ENCODE measurements at regions of chr2 and their contacts with region 1.

Region 1: DNA sequence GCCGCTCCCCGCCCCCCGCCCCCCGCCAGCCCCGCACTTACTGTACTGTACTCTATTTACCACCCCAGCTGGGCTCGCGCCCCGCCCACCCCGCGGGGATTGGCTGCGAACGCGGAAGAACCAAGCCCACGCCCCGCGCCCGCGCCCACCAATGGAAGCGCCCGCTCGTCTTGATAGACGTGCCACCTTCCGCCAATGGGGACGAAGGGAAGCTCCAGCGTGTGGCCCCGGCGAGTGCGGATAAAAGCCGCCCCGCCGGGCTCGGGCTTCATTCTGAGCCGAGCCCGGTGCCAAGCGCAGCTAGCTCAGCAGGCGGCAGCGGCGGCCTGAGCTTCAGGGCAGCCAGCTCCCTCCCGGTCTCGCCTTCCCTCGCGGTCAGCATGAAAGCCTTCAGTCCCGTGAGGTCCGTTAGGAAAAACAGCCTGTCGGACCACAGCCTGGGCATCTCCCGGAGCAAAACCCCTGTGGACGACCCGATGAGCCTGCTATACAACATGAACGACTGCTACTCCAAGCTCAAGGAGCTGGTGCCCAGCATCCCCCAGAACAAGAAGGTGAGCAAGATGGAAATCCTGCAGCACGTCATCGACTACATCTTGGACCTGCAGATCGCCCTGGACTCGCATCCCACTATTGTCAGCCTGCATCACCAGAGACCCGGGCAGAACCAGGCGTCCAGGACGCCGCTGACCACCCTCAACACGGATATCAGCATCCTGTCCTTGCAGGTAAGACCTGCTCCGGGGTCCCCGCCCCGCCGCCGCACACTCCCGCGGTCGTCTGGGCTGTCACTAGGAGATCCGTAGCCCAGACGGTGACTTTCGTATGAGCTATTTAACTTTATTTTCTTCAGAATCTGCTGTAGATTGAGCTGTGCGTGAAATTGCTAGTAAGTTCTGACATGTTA is at the start of gene ID2:
- DNase-seq: peak; percentile 99
- total RNA-seq, gene ID2: 35.1 TPM

Region 2: DNA sequence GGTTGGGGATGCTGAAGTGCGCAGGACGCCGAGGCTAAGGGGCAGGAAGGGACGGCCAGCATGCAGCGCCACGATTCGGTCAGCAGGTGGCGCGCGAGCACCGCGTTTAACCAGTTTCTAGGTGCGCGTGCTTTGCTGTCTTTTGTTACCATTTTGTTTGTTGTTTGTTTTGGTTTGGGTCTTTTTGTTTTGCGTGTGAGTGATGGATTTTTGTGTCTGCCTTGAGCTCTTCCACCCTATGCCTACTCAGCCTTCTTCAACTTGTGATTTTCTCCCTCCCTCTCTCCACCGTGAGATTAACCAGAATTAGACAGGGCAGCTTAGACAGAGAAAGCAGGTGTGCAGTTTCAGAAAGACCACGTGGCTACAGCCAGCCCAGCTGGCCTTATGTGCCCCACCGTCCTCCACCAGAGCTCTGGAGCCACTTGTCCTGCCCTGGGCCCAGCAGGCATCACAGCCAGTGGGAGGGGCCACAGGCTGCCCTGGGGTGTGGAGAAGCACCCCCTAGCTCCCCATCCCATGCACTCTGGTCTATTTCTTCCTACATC is 1584.6 kb before region 1 on chr2:
- intact Hi-C with region 1: loop called (anchors 5 kb)
- DNase-seq: peak; percentile 91

Region 3: DNA sequence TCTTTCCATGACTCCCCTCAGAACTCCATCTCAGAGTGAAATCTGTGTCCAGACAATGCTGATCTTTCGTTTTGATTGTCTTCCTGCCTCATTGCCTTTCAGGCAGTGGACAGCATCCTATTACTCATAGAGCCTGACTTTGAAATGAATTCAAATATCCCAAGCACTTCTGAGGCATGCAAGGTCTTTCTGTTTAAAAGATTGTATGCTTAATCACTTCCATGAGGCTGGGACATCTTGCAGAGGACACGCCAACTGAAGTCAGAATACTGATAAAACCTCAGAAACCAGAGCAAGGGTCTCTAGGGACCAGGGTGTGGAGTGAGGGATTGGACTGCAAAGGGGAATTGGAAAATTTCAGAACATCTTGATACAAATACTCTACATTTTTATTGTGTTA is 836.7 kb before region 1 on chr2:
- intact Hi-C with region 1: loop called (anchors 10 kb)
- DNase-seq: no peak

Region 4: DNA sequence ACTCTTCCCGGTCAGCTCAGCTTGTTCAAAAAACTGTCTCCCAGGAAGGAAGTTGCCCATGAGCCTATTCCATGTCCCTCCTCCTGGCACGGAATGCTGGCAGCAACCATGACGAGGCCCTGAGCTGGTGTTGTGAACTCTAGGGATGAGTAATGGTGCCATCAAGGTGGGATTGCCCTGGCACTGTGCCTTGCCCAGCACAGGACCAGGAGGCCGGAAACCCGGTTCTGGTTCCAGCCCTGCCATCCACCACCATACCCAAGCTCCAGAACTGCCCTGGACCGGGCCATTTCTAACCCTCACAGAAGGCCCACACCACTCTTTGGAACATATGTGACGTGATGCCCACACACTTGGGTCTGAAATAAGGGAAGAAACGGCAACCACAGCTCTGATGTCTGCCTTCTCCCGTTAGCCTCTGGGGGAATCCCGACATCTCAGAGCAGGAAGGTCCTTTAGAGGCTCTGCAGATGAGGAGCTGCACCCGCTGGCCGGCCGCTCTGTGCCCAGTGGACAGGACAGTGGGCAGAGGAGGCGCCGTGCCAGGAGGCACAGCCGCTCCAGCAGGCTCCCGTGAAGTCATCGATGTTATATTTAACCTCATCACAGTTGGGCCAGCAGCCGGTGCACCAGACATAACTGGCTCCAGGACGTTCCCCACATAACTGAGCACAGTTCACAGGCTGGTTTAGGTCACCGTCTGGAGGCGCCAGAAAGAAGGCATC is 462.2 kb before region 1 on chr2:
- intact Hi-C with region 1: loop called (anchors 5 kb)
- DNase-seq: peak; percentile 85

Region 5: GRCh38 chr2:8477552-8478470 is 204.2 kb before region 1 on chr2:
- intact Hi-C with region 1: loop called (anchors 5 kb)
- DNase-seq: no peak

Region 6: GRCh38 chr2:8594731-8595427 is 87.2 kb before region 1 on chr2:
- intact Hi-C with region 1: loop called (anchors 5 kb)
- DNase-seq: no peak